ENCODE measurements at regions of chr2 and their contacts with region 1.

Region 1: DNA sequence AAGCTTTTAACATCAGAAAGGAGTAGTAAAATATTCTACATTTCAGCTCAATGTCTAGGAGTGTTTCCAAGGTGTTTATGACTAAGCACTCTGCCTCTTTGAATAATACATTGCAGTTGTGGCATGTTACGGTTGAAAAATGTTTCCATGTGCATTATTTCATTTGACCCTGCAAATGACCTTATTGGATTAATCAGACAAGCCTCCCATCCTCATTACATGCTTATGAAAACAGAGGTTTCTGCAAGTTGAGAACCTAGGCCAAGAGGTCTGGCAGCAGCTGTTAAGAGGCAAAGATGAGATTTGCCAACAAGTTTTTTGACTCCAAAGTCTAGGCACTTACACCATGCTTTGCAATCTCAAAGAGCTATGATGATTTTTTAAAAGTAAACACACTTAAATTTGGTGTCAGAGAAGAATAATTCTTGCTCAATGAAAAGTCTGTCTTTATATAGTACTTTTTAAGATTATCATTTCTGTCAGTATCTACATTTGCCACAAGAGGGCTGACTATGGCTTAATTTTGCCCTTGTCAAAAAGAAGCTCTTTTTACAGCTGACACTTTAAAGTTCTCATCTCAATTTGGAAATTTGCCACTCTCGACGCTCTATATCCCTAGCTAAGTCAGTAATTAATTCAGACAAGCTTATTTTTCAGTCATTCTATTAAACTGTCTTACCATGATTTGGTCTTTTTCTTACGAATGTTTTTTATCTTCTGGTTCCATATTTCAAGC is 260.6 kb downstream of the PAX3 start:
- DNase-seq: no peak
- H3K4me3 ChIP-seq: no peak overlapping the region
- CTCF ChIP-seq: peak; percentile 20

Region 2: DNA sequence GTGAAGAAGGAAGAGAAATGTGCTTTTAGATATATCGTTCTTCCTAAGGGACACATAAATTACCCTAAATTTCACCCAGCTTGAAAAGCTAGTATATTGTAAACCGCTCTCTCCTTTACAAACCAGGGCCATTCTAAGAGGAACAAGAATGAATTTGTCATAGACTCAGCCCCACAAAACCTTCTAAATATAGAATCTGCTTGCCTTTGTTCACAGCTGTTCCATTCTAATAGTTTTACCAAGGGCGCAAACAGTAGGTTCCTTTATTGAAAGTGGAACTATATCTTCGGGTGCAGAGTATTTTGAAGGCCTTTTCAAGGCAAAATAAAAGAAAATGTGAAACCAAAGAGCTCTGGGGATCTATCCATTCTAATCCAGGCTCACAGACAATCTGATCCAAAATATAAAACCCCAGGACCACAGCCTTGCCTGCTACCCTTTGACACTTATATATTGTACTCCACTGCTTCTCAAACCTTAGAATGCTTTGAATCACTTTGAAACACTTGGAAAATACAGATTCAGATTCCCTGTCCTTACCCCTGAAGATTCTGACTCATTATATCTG is 56.2 kb before region 1 on chr2:
- CTCF ChIA-PET with region 1: no interaction called
- POLR2A ChIA-PET with region 1: no interaction called
- DNase-seq: no peak
- H3K4me3 ChIP-seq: no peak overlapping the region
- CTCF ChIP-seq: no peak

Region 3: DNA sequence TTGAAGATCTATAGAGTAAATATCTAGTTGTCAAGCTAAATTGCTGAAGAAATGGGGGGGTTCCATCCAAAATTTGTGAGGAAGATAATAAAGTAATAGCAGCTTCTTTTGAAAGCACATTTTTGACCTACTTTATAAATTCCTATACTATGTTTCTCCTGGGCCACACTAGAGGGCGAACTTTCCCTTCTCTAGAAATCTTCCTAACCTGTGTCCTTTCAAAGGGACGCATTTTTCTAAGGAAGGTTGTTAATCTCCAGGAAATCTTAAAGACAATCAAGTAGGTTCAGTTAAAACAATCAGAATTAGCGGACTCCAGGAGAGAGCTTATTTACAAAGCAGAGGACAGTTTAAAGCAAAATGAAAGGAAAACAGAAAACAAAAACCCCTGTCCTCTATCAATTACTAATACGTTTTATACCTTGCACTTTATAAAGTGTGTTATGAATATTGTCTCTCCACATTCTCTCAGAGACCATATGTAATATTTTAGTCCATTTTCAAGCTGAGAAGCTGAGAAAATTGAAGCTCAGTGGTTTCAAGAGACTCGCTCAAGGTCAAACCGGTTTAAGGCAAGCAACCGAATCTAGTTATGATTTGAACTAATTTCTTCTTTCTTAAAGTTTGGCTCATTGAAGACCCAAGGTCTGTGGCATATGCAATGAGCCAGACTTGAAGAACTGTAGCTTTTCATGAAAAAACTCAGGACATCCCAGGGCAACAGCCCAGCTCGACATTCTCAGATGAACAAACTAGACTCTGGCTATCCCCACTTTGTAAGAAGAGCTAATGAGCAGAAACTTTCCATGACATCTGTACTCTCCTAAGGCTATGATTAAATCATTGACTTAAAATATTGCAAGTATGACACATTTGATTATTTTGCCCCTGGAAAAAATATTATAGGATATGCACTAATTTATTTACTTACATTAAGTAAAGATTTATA is 13.0 kb before region 1 on chr2:
- CTCF ChIA-PET with region 1: interaction called, 35 read pairs
- POLR2A ChIA-PET with region 1: no interaction called
- DNase-seq: no peak
- H3K4me3 ChIP-seq: no peak overlapping the region
- CTCF ChIP-seq: peak; percentile 40

Region 4: GRCh38 chr2:222169346-222169745 is 131.1 kb after region 1 on chr2:
- CTCF ChIA-PET with region 1: no interaction called
- POLR2A ChIA-PET with region 1: no interaction called
- DNase-seq: peak; percentile 26
- H3K4me3 ChIP-seq: no peak overlapping the region
- CTCF ChIP-seq: no peak

Region 5: GRCh38 chr2:223051693-223052289 is 1013.6 kb after region 1 on chr2 and contains the start of gene KCNE4:
- CTCF ChIA-PET with region 1: no interaction called
- POLR2A ChIA-PET with region 1: no interaction called
- DNase-seq: no peak
- H3K4me3 ChIP-seq: peak within 1 kb of the TSS; percentile 62
- CTCF ChIP-seq: no peak

Measured in AG04449 (cell line).